Naive thymus-derived CD4-positive, alpha-beta T cell (primary cell): ENCODE measurements at regions of chr1 and their contacts with region 1.

Region 1: GRCh38 chr1:181142096-181142958 is 53.8 kb downstream of the IER5 start:
- DNase-seq: peak; percentile 70 to 91 (median 83)
- ATAC-seq: peak; percentile 96
- H3K4me3 ChIP-seq: no peak overlapping the region
- H3K4me3 Mint-ChIP-seq: peak overlapping the region in 4 of 10 donors; percentile 2 to 63 (median 18)
- H3K27ac ChIP-seq: no peak overlapping the region
- H3K27ac Mint-ChIP-seq: peak overlapping the region in 4 of 9 donors; percentile 28 to 81 (median 54)
- H3K4me1 ChIP-seq: peaks cover 7 to 15% of the 10 kb centered on the region in 2 donors
- H3K4me1 Mint-ChIP-seq: peaks cover 18 to 62% (median 34%) of the 10 kb centered on the region in 7 donors
- H3K27me3 ChIP-seq: no peaks in the 10 kb centered on the region
- H3K27me3 Mint-ChIP-seq: peaks cover 0 to 24% (median 0%) of the 10 kb centered on the region in 5 donors

Region 2: DNA sequence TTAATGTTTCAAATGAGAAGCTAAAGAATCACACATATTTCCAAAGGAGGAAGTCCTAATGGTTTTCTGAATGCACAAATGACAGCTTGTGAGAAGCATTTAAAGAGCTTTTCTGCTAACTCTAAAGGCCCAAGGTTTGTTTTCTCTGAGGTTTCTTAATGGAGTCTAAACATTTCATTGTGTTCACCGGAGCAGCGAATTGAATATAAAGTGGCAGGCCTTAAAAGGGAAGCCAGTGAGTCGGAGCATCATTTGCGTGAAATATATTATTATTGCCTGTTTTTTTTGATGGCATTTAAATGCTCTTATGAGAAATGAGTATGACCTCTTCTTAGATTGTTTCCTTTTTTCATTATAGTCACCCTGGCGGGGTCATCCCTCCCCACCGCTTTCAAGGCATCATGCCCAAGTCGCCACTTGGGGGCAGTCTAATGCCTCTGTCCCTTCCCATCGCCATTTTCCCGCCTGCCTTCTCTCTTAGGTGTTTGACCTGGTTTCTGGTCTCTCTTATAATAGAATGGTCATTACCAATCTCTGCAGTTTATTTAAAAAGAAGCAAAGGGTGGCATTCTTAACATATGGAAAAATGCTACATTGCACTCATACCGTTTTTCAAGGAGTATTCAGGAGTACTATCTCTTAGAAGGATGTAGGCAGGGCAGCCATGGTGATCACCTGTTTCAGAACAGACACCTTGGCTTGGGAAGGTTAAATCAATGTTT is 608.9 kb before region 1 on chr1:
- CTCF ChIA-PET with region 1: no interaction called
- POLR2A ChIA-PET with region 1: no interaction called
- intact Hi-C with region 1: loop called in 1 of 2 experiments (anchors 2 kb)
- DNase-seq: peak; percentile 21 to 65 (median 40)
- ATAC-seq: peak; percentile 81
- H3K4me3 ChIP-seq: no peak overlapping the region
- H3K4me3 Mint-ChIP-seq: no peak overlapping the region
- H3K27ac ChIP-seq: no peak overlapping the region
- H3K27ac Mint-ChIP-seq: no peak overlapping the region
- H3K4me1 ChIP-seq: no peaks in the 10 kb centered on the region
- H3K4me1 Mint-ChIP-seq: peaks cover 0 to 6% (median 0%) of the 10 kb centered on the region in 7 donors
- H3K27me3 ChIP-seq: peaks cover 0 to 4% of the 10 kb centered on the region in 2 donors
- H3K27me3 Mint-ChIP-seq: peaks cover 0 to 34% (median 0%) of the 10 kb centered on the region in 5 donors

Region 3: GRCh38 chr1:181033799-181034451 is 108.4 kb before region 1 on chr1 and contains the start of gene MR1:
- CTCF ChIA-PET with region 1: interaction called, 35 read pairs
- POLR2A ChIA-PET with region 1: interaction called, 13 read pairs
- intact Hi-C with region 1: loop called (anchors 1 kb)
- DNase-seq: peak in 8 of 9 donors; percentile 32 to 92 (median 88)
- ATAC-seq: peak; percentile 97
- H3K4me3 ChIP-seq: peak within 1 kb of the TSS; percentile 77
- H3K4me3 Mint-ChIP-seq: peak within 1 kb of the TSS; percentile 84 to 99 (median 97)
- H3K27ac ChIP-seq: peak within 1 kb of the TSS; percentile 95
- H3K27ac Mint-ChIP-seq: peak within 1 kb of the TSS; percentile 95 to 100 (median 98)
- H3K4me1 ChIP-seq: peaks cover 32 to 42% of the 10 kb centered on the region in 2 donors
- H3K4me1 Mint-ChIP-seq: peaks cover 39 to 69% (median 61%) of the 10 kb centered on the region in 7 donors
- H3K27me3 ChIP-seq: no peaks in the 10 kb centered on the region
- H3K27me3 Mint-ChIP-seq: peaks cover 0 to 6% (median 0%) of the 10 kb centered on the region in 5 donors
- total RNA-seq, gene MR1: 19.8 to 35.8 (median 29.7) TPM

Region 4: DNA sequence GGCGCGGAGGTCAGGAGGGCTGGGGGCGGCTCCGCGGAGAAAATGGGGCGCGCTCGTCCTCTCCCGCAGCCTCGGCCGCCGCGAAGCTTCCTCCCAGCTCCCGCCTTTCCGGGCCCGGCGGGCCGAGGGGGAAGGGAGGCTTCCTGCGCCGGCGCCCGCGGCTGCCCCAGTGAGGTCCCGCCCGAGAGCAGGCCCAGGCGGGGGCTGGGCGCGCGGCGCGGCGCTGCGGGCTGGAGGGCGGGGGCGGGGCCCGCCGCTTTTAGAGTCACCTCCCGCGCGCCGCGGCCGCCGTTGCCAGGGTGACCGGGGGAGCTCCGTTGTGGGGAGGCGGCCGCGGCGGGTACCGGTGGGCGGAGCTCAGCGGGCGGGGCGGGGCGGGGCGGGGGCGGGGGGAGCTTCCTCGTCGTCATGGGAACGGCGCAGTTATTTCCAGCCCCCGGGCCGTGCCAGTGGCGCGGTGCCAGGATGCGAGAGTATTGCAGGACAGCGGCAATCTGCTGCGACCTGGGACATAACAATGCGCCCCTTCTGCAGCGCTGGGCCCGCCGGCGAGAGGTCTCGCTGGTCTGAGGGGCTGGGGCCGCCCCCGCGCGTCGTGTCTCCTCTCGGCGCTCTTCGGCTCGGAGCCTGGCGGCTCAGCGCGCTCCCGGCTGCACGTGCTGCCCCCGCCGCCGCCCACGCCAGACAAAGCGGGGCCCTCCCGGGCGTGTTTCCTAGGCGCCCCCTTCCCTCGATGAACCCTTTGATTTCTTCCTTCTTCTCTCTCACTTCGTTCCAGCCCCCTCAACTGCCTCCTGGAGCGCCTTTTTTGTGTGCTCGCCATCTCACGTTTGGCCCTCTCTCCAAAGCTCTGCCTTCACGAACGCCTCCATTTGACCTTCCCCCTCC is 36.9 kb before region 1 on chr1:
- CTCF ChIA-PET with region 1: interaction called, 11 read pairs
- POLR2A ChIA-PET with region 1: interaction called, 13 read pairs
- intact Hi-C with region 1: loop called (anchors 1 kb)
- DNase-seq: peak; percentile 81 to 94 (median 90)
- ATAC-seq: peak; percentile 94
- H3K4me3 ChIP-seq: peak overlapping the region; percentile 61
- H3K4me3 Mint-ChIP-seq: peak overlapping the region; percentile 84 to 96 (median 91)
- H3K27ac ChIP-seq: peak overlapping the region; percentile 85
- H3K27ac Mint-ChIP-seq: peak overlapping the region; percentile 69 to 97 (median 89)
- H3K4me1 ChIP-seq: peaks cover 16 to 20% of the 10 kb centered on the region in 2 donors
- H3K4me1 Mint-ChIP-seq: peaks cover 22 to 76% (median 61%) of the 10 kb centered on the region in 7 donors
- H3K27me3 ChIP-seq: no peaks in the 10 kb centered on the region
- H3K27me3 Mint-ChIP-seq: peaks cover 0 to 43% (median 0%) of the 10 kb centered on the region in 5 donors